ENCODE measurements at regions of chr6 and their contacts with region 1.

Region 1: GRCh38 chr6:56381840-56382251 is 134.5 kb upstream of the COL21A1 start:
- DNase-seq: no peak
- H3K4me3 ChIP-seq: no peak overlapping the region
- H3K27ac ChIP-seq: peak overlapping the region; percentile 28 to 74
- H3K4me1 ChIP-seq: peaks cover 0 to 55% (median 23%) of the 10 kb centered on the region in 4 donors
- H3K27me3 ChIP-seq: no peaks in the 10 kb centered on the region
- CTCF ChIP-seq: no peak

Region 2: DNA sequence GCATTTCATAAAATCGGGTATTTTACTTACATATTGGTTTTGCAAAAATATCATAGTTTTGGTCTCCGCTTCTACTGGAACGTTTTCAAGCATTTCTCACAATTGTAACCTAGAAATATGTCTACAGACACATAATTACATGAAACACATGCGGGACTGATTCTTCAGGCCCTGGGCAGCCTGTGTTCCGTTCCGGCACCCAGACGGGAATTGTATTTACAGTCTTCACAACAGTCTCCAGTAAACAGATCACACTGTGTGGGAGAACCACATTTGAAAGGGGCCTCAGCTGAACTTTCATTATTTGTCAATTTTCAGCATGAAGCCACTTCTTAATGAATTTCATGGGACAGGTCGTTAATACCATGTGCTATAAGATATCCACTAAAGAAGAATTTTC is 64.0 kb after region 1 on chr6:
- intact Hi-C with region 1: loop called (anchors 10 kb)
- DNase-seq: no peak
- H3K4me3 ChIP-seq: no peak overlapping the region
- H3K27ac ChIP-seq: peak overlapping the region; percentile 27 to 40
- H3K4me1 ChIP-seq: peaks cover 0 to 47% (median 14%) of the 10 kb centered on the region in 4 donors
- H3K27me3 ChIP-seq: no peaks in the 10 kb centered on the region
- CTCF ChIP-seq: no peak

Region 3: DNA sequence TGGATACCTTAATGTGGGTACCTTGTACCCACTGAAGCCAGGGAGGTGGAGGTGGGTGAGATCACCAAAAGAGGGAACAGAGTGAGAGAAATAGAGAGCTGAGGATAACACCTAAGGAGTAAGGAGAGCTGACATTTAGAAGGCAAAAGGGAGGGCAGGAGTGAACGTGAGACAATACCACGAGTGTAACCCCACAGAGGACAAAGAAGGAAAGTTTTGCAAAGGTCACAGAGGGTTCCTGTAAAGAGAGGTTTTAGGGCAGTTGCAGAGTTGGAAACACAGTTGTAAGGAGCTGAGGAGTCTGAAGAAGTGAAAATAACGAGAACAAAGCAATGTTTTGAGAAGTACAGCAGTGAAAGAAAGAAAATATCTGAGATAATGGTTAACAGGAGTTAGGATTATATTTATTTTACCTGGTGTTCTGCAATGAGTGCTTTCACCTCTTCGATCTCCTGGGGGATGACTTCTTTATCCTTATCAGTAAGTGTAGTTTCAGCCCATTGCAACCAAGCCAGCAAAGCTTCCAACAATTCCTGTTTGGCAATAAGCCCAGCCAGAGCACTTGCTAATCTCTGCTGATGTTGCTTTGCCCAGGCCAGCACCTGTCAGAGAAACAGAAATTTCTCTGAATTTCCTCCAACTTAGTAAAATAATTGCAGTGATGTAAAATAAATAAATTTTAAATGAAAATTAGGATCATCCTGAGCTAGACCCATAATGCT is 94.1 kb after region 1 on chr6:
- intact Hi-C with region 1: no loop called
- DNase-seq: no peak
- H3K4me3 ChIP-seq: no peak overlapping the region
- H3K27ac ChIP-seq: no peak overlapping the region
- H3K4me1 ChIP-seq: peaks cover 0 to 21% (median 4%) of the 10 kb centered on the region in 4 donors
- H3K27me3 ChIP-seq: no peaks in the 10 kb centered on the region
- CTCF ChIP-seq: no peak

Measured in tibial artery (tissue), 4 donors.